IMR-90 (cell line): ENCODE measurements at regions of chr1 and their contacts with region 1.

Region 1: GRCh38 chr1:32848354-32849063 is 22.2 kb downstream of the FNDC5 start:
- DNase-seq: no peak
- ATAC-seq: no peak
- H3K4me3 ChIP-seq: no peak overlapping the region
- H3K27ac ChIP-seq: no peak overlapping the region
- H3K4me1 ChIP-seq: no peaks in the 10 kb centered on the region
- H3K27me3 ChIP-seq: no peaks in the 10 kb centered on the region
- CTCF ChIP-seq: no peak
- POLR2A ChIP-seq: no peak
- RAD21 ChIP-seq: no peak

Region 2: GRCh38 chr1:32684167-32684811 is 164.2 kb before region 1 on chr1:
- CTCF ChIA-PET with region 1: no interaction called
- POLR2A ChIA-PET with region 1: no interaction called
- dilution Hi-C with region 1: no loop called
- in situ Hi-C with region 1: no loop called
- intact Hi-C with region 1: loop called (anchors 5 kb)
- DNase-seq: peak; percentile 74
- ATAC-seq: peak; percentile 30; the same call in 1 of the 2 replicates
- H3K4me3 ChIP-seq: no peak overlapping the region
- H3K27ac ChIP-seq: peak overlapping the region; percentile 73; the same call in 1 of the 2 replicates
- H3K4me1 ChIP-seq: peaks cover 11% of the 10 kb centered on the region
- H3K27me3 ChIP-seq: no peaks in the 10 kb centered on the region
- CTCF ChIP-seq: no peak
- POLR2A ChIP-seq: no peak; the same call in 1 of the 2 replicates
- RAD21 ChIP-seq: no peak

Region 3: DNA sequence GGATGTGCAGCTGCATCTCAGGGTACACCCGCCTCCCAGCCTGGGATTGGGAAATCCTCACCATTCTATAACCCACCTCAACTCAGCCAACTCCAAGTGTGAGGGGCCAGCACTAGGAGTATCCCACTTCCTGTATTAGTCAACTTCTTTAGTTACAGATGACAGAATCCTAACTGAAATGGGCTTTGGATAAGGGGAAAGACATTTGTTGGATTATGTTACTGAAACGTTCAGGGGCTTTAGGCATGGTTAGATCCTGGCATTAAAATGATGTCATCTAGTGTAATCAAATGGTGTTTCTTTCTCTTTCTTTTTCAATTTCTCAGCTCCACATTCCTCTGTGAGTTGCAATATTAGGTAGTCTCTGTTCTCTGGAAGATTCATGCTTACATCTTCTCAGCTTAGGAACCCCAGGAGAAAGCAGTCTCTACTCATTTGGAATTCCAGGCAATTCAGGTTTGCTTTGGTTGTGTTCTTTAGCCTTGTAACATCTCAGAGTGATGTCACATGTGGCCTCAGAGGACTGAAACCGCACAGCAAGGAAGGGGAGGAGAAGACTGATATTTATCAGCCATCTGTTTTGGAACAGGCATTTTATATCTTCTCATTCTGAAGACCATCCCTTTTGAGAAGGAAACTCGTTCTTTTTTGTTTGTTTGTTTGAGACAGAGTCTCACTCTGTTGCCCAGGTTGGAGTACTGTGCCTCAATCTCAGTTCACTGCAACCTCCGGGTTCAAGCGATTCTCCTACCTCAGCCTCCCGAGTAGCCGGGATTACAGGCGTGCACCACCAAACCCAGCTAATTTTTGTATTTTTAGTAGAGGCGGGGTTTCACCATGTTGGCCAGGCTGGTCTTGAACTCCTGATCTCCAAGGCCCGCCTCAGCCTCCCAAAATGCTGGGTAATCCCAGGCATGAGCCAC is 71.6 kb after region 1 on chr1:
- CTCF ChIA-PET with region 1: no interaction called
- POLR2A ChIA-PET with region 1: no interaction called
- dilution Hi-C with region 1: no loop called
- in situ Hi-C with region 1: no loop called
- intact Hi-C with region 1: no loop called
- DNase-seq: peak; percentile 72
- ATAC-seq: peak; percentile 73
- H3K4me3 ChIP-seq: no peak overlapping the region
- H3K27ac ChIP-seq: 0 out of 2 replicates have a peak overlapping the region, but pooled peaks have one; percentile 15
- H3K4me1 ChIP-seq: 0 out of 2 replicates have a peak, but pooled peaks cover 1% of the 10 kb centered on the region
- H3K27me3 ChIP-seq: peaks cover 2% of the 10 kb centered on the region; the same call in 1 of the 2 replicates
- CTCF ChIP-seq: no peak
- POLR2A ChIP-seq: no peak
- RAD21 ChIP-seq: no peak

Region 4: GRCh38 chr1:32981003-32981901 is 132.7 kb after region 1 on chr1:
- CTCF ChIA-PET with region 1: no interaction called
- POLR2A ChIA-PET with region 1: no interaction called
- dilution Hi-C with region 1: no loop called
- in situ Hi-C with region 1: no loop called
- intact Hi-C with region 1: no loop called
- DNase-seq: peak; percentile 94
- ATAC-seq: peak; percentile 78
- H3K4me3 ChIP-seq: no peak overlapping the region
- H3K27ac ChIP-seq: peak overlapping the region; percentile 12
- H3K4me1 ChIP-seq: peaks cover 17% of the 10 kb centered on the region
- H3K27me3 ChIP-seq: no peaks in the 10 kb centered on the region
- CTCF ChIP-seq: no peak
- POLR2A ChIP-seq: peak; percentile 81
- RAD21 ChIP-seq: peak; percentile 6; the same call in 1 of the 2 replicates